ENCODE measurements at regions of chr4 and their contacts with region 1.

Region 1: DNA sequence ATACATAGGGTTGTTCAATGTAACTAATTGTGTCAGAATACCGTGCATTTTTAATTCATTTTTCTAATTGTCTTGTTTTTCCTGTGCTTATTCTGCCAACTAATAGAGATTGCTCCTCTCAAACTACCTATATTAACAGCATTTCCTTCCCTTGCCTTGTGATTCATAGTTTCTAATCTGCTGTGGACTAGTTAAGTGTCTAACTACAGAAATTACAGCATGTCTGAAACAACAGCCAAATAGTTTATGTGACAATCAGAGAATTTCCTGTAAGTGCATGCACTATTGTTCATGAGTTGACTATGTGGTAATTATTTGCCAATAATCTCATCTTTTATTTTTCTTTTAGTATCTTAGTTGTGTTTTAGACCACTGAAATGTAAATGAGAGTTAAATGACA is 4.1 kb upstream of the SEC24B start:
- DNase-seq: no peak
- CTCF ChIP-seq: no peak

Region 2: DNA sequence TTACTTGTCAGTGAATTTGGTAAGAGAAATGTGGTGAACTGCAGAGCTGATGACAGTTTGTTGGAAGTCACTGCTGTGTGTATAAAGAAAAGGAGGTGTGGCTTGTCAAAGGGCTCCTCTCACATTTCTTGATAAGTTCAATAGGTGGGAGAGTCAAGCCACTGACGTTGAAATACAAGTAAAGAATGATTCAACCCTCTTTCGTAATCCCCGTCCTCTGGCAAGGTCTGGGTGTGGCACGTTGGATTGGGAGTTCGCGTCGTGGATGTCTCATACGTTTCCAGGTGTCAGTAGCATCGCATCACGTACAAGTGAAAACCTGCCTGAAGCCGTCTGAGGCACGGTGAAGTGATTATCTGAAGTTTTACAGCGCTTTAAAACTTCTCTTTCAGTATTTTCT is 559.5 kb after region 1 on chr4:
- in situ Hi-C with region 1: loop called (anchors 5 kb)
- DNase-seq: no peak
- CTCF ChIP-seq: no peak